ENCODE measurements at regions of chr20 and their contacts with region 1.

Region 1: GRCh38 chr20:50635667-50636503 is 55.5 kb downstream of the RIPOR3 start:
- DNase-seq: peak; percentile 84 to 85
- ATAC-seq: peak; percentile 64 to 76
- H3K4me3 ChIP-seq: peak overlapping the region; percentile 37
- H3K27ac ChIP-seq: peak overlapping the region; percentile 67 to 95
- H3K4me1 ChIP-seq: peaks cover 36% of the 10 kb centered on the region
- CTCF ChIP-seq: peak; percentile 97
- EP300 ChIP-seq: no peak
- POLR2A ChIP-seq: no peak
- RAD21 ChIP-seq: peak; percentile 56 to 74

Region 2: GRCh38 chr20:50449738-50450495 is 186.0 kb before region 1 on chr20:
- CTCF ChIA-PET with region 1: no interaction called
- POLR2A ChIA-PET with region 1: no interaction called
- DNase-seq: no peak
- ATAC-seq: peak; percentile 11 to 48; a peak in 4 of 6 replicates
- H3K4me3 ChIP-seq: no peak overlapping the region
- H3K27ac ChIP-seq: peak overlapping the region; percentile 91 to 94; a peak in 5 of 6 replicates
- H3K4me1 ChIP-seq: peaks cover 42% of the 10 kb centered on the region
- CTCF ChIP-seq: no peak
- EP300 ChIP-seq: no peak
- POLR2A ChIP-seq: no peak
- RAD21 ChIP-seq: no peak

Region 3: GRCh38 chr20:50605136-50605535 is 30.7 kb before region 1 on chr20:
- CTCF ChIA-PET with region 1: no interaction called
- POLR2A ChIA-PET with region 1: no interaction called
- DNase-seq: no peak
- ATAC-seq: no peak
- H3K4me3 ChIP-seq: no peak overlapping the region
- H3K27ac ChIP-seq: no peak overlapping the region
- H3K4me1 ChIP-seq: no peaks in the 10 kb centered on the region
- CTCF ChIP-seq: no peak
- EP300 ChIP-seq: no peak
- POLR2A ChIP-seq: no peak
- RAD21 ChIP-seq: no peak

Region 4: GRCh38 chr20:50663095-50663850 is 27.4 kb after region 1 on chr20:
- CTCF ChIA-PET with region 1: interaction called, 25 read pairs
- POLR2A ChIA-PET with region 1: no interaction called
- DNase-seq: peak in 1 of 2 experiments; percentile 79
- ATAC-seq: peak; percentile 81 to 86
- H3K4me3 ChIP-seq: no peak overlapping the region
- H3K27ac ChIP-seq: peak overlapping the region; percentile 56 to 72; a peak in 5 of 6 replicates
- H3K4me1 ChIP-seq: peaks cover 42% of the 10 kb centered on the region
- CTCF ChIP-seq: peak; percentile 65
- EP300 ChIP-seq: no peak
- POLR2A ChIP-seq: no peak
- RAD21 ChIP-seq: peak; percentile 82 to 86

Region 5: DNA sequence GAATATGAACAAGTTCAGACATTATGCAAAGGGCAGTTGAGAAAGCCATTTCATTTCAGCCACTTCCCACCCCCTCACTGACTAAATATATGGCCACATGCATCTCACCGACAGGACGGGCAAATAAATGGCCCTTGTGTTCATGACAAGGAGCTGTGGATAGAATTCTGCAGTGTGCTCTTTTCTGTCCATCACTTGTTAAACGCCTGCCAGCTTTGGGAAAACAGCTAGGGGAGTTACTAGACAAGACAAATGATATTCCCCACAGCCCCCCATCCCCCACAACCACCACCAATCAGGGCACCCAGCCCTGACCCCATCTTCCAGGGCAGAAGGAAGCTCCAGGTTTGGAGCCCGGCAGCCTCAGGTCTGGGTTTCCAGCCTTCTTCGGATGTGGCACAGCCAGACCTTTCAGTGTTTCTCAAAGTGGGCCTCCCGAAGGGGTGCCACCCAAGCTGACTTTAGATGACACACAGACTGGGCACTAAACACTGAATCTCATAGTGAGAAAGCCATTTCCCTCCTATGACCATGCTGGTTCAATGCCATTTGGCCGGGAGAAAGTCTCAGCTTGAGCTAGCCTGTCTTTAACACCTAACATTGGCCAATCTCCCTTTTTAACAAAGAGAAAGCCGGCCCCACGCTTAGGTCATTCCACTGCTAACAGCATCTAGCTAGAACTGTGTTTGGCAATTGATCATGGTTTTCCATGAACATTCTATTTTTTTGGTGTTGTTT is 59.4 kb after region 1 on chr20:
- CTCF ChIA-PET with region 1: interaction called, 10 read pairs
- POLR2A ChIA-PET with region 1: no interaction called
- DNase-seq: no peak
- ATAC-seq: peak in 1 of 2 experiments; percentile 15; a peak in 1 of 6 replicates
- H3K4me3 ChIP-seq: no peak overlapping the region
- H3K27ac ChIP-seq: peak overlapping the region in 1 of 2 experiments; percentile 18; a peak in 3 of 6 replicates
- H3K4me1 ChIP-seq: peaks cover 19% of the 10 kb centered on the region
- CTCF ChIP-seq: no peak
- EP300 ChIP-seq: no peak
- POLR2A ChIP-seq: no peak
- RAD21 ChIP-seq: no peak

Region 6: DNA sequence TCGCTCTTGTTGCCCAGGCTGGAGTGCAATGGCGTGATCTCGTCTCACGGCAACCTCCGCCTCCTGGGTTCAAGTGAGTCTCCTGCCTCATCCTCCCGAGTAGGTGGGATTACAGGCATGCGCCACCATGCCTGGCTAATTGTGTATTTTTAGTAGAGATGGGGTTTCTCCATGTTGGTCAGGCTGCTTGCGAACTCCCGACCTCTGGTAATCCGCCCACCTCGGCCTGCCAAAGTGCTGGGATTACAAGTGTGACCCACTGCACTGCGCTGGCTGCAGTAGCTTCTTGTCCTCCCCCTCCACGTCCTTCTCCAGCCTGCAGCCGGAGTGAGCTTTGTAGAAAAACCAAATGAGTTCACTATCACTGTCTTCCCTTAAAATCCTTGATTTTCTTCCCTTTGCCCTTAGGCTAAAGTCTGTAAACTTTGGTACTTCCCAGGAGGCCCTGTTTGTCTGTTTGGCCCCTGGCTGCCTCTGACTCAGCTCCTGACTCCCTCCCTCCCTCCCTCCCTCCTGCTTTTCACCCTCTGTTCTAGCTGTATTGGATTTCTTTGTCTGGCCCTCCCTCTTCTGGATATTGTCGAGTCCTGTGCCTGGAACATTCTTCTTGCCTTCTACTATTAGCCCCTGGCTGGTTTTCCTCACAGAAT is 108.4 kb after region 1 on chr20:
- CTCF ChIA-PET with region 1: interaction called, 64 read pairs
- POLR2A ChIA-PET with region 1: interaction called, 4 read pairs
- DNase-seq: peak; percentile 84 to 92
- ATAC-seq: peak; percentile 86 to 97
- H3K4me3 ChIP-seq: peak overlapping the region; percentile 23; the same call in 2 of the 3 replicates
- H3K27ac ChIP-seq: peak overlapping the region; percentile 86 to 94
- H3K4me1 ChIP-seq: peaks cover 90% of the 10 kb centered on the region
- CTCF ChIP-seq: peak; percentile 57
- EP300 ChIP-seq: peak in 1 of 2 experiments; percentile 24; a peak in 1 of 5 replicates
- POLR2A ChIP-seq: no peak
- RAD21 ChIP-seq: peak; percentile 81 to 84

Measured in A549 (cell line).